Right lobe of liver (tissue), 6 donors: ENCODE measurements at regions of chr9 and their contacts with region 1.

Region 1: GRCh38 chr9:16262477-16263261 is 607.8 kb downstream of the BNC2 start:
- DNase-seq: peak in 1 of 3 donors; percentile 34
- ATAC-seq: peak; percentile 36 to 62 (median 46)
- H3K4me3 ChIP-seq: no peak overlapping the region
- H3K27ac ChIP-seq: no peak overlapping the region
- H3K4me1 ChIP-seq: peaks cover 0 to 4% (median 0%) of the 10 kb centered on the region in 4 donors
- H3K27me3 ChIP-seq: no peaks in the 10 kb centered on the region
- CTCF ChIP-seq: no peak
- POLR2A ChIP-seq: no peak

Region 2: DNA sequence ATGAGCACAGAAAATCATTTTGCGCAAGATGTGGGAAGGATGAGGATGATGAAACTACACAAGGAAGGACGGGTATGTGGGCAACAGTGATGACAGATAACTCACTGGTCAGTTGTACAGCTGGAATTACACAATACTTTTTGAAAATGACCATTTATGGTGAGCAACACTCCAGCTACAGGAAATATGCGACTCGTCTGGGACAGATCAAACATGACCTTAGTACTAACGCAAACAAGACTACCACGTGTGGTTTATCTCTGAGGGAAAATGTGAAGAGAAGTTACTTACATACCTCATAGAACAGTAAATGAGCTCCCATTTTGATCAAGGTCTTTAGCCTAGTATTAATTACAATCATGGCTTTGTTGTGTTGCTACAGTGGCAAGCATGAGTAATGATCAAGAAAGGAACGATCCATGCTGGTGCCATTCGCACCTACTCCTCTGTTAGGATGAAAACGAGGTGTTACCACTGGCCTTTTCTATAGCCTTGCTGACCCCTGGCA is 150.9 kb after region 1 on chr9:
- intact Hi-C with region 1: loop called in 1 of 2 experiments (anchors 5 kb)
- DNase-seq: no peak
- ATAC-seq: peak; percentile 85 to 97 (median 90)
- H3K4me3 ChIP-seq: no peak overlapping the region
- H3K27ac ChIP-seq: peak overlapping the region; percentile 83 to 97 (median 95)
- H3K4me1 ChIP-seq: peaks cover 0 to 22% (median 5%) of the 10 kb centered on the region in 4 donors
- H3K27me3 ChIP-seq: no peaks in the 10 kb centered on the region
- CTCF ChIP-seq: no peak
- POLR2A ChIP-seq: peak; percentile 46